AG04449 (cell line): ENCODE measurements at regions of chr19 and their contacts with region 1.

Region 1: GRCh38 chr19:13060964-13061927 is 41.4 kb downstream of the LYL1 start:
- DNase-seq: no peak
- H3K4me3 ChIP-seq: peak overlapping the region; percentile 36
- CTCF ChIP-seq: peak; percentile 98

Region 2: DNA sequence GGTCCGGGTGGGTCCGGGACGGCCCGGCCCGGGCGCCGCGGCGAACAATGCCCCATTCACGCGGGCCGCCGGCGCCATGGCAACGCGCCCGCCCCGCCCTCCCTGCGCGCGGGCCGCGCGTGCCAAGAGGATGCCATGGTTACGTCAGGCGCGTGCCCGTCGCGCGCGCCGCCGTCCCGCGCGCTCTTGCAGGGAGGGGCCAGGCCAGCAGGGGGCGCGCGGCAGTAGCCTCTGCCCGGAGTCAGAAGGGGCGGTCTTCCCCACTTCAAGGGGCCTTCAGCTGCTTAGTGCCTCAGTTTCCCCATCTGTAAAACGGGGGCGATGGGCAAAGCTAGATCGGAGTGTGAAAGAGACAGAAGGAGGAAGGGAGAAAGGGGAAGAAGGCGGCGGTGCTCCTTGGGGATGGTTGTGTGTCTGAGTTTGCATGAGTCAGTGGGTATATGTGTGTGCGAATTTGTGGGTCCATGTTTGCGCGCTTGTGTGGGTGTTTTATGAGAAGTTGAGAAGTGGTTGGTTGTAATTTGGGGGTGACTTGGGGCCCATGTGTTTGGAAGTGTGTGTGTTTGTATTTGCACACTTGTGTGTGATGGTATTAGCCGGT is 77.6 kb before region 1 on chr19:
- CTCF ChIA-PET with region 1: interaction called, 486 read pairs
- POLR2A ChIA-PET with region 1: no interaction called
- DNase-seq: no peak
- H3K4me3 ChIP-seq: peak overlapping the region; percentile 52
- CTCF ChIP-seq: peak; percentile 87

Region 3: GRCh38 chr19:13002166-13002898 is 58.9 kb before region 1 on chr19:
- CTCF ChIA-PET with region 1: interaction called, 54 read pairs
- POLR2A ChIA-PET with region 1: no interaction called
- DNase-seq: no peak
- H3K4me3 ChIP-seq: no peak overlapping the region
- CTCF ChIP-seq: no peak

Region 4: DNA sequence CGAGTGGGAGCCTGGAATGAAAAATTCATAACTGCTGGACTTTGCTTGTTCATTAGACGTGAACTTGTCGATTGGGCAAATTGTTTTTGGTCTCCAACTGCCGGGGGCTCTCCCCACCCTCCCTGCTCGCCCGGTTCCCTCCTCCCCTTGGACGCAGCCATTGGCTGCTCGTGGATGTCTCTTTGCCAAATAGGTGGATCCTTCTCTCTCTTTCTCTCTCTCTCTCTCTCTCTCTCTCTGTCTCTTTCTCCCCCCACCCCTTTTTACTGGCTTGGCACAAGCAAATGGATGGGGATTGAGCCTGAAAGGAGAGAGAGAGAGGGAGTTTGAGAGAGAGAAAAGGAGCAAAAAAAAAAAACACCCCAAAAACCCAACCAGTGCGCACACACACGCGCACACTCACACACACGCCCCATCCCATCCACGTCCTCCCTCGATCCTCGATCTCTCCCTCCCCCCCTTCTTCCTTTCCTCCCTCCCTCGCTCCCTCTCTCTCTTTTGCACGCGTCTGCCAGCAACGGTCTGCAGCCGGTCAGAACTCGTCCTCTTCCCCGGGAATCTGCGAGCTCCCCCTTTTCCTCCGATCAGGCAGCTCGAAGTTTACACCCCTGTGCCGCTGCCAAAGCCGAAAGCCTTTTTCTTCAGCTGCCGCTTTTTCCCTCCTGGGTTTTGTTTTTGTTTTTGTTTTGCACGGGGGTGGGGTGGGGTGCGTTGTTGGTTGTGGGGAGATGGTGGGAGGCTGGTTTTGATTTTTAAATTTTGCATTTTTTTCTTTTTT is 38.2 kb before region 1 on chr19:
- CTCF ChIA-PET with region 1: interaction called, 427 read pairs
- POLR2A ChIA-PET with region 1: interaction called, 18 read pairs
- DNase-seq: peak; percentile 88
- H3K4me3 ChIP-seq: peak overlapping the region; percentile 65
- CTCF ChIP-seq: no peak

Region 5: DNA sequence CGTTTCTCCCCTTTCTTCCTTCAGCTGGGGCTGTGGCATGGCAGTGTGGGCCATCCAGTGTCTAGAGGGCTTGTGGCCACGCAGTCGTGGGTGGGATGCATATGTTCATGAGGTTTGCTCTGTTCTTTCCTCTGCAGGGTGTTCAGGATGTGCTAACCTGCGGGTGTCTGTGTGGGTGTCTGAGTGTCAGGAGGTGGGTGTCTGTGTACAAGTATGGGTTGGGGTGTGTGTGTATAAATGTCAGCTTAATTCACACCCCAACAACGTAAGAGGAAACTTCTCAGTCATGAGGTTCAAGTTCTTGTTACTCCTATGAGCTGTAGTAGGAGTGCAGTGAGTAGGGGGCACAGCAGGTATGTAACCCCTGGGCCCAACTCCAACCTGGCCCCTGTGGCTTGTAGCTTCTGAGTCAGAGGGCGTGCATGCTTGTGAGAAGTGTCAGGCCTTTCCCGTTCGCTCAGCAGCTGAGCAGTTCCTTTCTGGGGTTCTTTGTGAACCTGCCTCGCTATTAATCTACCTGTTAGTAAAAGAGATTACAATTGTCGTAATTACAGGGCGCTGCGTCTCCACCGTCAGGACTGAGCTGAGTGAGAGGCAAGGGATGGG is 16.9 kb before region 1 on chr19:
- CTCF ChIA-PET with region 1: interaction called, 60 read pairs
- POLR2A ChIA-PET with region 1: no interaction called
- DNase-seq: no peak
- H3K4me3 ChIP-seq: no peak overlapping the region
- CTCF ChIP-seq: no peak